ENCODE measurements at regions of chr1 and their contacts with region 1.

Region 1: GRCh38 chr1:32179443-32180185 is at the start of gene TXLNA:
- DNase-seq: peak; percentile 94
- H3K4me3 Mint-ChIP-seq: peak within 1 kb of the TSS; percentile 86
- H3K27ac Mint-ChIP-seq: peak within 1 kb of the TSS; percentile 96
- H3K4me1 Mint-ChIP-seq: peaks cover 47% of the 10 kb centered on the region
- H3K27me3 Mint-ChIP-seq: no peaks in the 10 kb centered on the region
- total RNA-seq, gene TXLNA: 84.3 to 86.2 TPM

Region 2: DNA sequence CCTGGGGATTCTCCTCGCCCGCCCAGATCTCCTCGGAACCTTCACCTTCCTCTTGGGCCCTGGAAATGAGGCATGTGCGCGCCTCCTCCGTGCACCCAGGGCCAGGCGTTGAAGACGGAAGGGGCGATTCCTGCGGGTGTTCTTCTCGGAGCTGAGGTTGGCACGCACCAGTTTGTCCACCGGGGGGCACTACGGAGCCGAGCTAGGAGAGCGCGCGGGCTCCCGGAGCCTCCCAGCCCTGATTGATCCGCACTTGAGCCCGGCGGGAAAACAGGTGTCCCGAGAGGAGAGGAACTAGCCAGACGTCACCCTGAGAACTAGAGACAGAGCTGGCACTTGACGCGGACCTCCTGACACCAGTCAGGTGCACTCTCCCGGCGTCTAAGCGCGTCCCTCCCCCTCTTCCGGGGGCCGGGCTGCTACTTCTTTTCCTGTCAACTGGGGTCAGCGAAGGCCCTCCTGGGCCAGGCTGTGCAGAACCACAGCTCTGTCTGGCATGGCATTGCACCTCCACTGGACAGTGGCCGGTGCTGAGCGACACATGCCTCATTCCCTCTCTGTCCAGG is 784.9 kb before region 1 on chr1:
- CTCF ChIA-PET with region 1: no interaction called
- intact Hi-C with region 1: no loop called
- DNase-seq: peak; percentile 90
- H3K4me3 Mint-ChIP-seq: peak overlapping the region; percentile 72
- H3K27ac Mint-ChIP-seq: no peak overlapping the region
- H3K4me1 Mint-ChIP-seq: peaks cover 6% of the 10 kb centered on the region
- H3K27me3 Mint-ChIP-seq: no peaks in the 10 kb centered on the region

Region 3: DNA sequence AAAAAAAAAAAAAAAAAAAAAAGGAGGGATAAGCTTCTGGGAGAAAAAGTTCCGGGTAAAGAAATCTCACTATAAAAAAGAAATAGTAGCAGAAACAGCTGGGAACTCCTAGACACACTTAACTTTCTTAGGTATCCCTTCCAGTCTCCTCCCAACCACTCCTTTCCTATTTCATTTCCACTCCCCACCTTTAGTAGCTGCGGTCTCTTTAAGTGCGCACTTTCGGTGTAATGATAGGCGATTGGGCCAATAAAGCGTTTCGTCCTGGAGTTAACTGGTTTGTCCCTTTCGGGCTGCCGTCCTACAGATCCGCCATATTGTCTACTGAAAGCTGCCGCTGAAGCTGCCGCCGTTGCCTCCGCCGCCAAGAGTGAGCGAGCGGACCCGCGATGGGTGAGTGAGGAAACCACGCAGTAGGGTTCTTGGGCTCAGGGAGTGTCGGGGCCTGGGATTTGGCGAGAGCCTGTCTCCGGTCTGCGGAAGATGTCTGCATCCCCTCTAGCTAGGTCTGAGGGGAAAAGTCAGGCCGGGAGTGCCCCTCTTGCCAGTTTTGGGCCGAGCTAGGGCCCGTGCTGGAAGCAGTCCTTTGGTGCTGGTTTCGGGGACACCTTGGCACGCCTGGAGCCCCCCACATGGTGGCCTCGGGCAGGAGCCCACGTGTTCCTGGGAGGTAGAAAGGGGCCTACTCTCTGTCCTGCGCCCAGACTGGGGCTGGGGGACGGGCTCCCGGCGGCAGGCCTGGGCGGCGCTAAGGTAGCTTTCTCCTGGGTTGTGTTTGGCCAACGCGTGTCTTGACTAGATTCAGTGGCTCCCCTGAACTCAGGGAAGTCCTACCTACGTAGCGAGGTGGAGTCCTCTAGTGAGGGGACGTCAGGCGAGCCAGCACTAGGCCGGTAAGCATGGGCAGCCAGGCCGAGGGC is 71.6 kb before region 1 on chr1 and contains the start of gene KPNA6:
- CTCF ChIA-PET with region 1: interaction called, 4 read pairs
- intact Hi-C with region 1: loop called (anchors 1 kb)
- DNase-seq: peak; percentile 97
- H3K4me3 Mint-ChIP-seq: peak within 1 kb of the TSS; percentile 99
- H3K27ac Mint-ChIP-seq: peak within 1 kb of the TSS; percentile 94
- H3K4me1 Mint-ChIP-seq: peaks cover 42% of the 10 kb centered on the region
- H3K27me3 Mint-ChIP-seq: no peaks in the 10 kb centered on the region
- total RNA-seq, gene KPNA6: 74.5 to 75.0 TPM

Region 4: GRCh38 chr1:32200226-32201010 is 20.8 kb after region 1 on chr1 and contains the start of gene CCDC28B:
- CTCF ChIA-PET with region 1: interaction called, 4 read pairs
- intact Hi-C with region 1: loop called (anchors 1 kb)
- DNase-seq: peak; percentile 72
- H3K4me3 Mint-ChIP-seq: peak within 1 kb of the TSS; percentile 70
- H3K27ac Mint-ChIP-seq: peak within 1 kb of the TSS; percentile 88
- H3K4me1 Mint-ChIP-seq: peaks cover 38% of the 10 kb centered on the region
- H3K27me3 Mint-ChIP-seq: no peaks in the 10 kb centered on the region
- total RNA-seq, gene CCDC28B: 13.1 to 14.8 TPM

Measured in activated naive CD4-positive, alpha-beta T cell treated with anti-CD3 and anti-CD28 coated beads for 36 hours (primary cell).